Gastrocnemius medialis (tissue), 4 donors: ENCODE measurements at regions of chr22 and their contacts with region 1.

Region 1: DNA sequence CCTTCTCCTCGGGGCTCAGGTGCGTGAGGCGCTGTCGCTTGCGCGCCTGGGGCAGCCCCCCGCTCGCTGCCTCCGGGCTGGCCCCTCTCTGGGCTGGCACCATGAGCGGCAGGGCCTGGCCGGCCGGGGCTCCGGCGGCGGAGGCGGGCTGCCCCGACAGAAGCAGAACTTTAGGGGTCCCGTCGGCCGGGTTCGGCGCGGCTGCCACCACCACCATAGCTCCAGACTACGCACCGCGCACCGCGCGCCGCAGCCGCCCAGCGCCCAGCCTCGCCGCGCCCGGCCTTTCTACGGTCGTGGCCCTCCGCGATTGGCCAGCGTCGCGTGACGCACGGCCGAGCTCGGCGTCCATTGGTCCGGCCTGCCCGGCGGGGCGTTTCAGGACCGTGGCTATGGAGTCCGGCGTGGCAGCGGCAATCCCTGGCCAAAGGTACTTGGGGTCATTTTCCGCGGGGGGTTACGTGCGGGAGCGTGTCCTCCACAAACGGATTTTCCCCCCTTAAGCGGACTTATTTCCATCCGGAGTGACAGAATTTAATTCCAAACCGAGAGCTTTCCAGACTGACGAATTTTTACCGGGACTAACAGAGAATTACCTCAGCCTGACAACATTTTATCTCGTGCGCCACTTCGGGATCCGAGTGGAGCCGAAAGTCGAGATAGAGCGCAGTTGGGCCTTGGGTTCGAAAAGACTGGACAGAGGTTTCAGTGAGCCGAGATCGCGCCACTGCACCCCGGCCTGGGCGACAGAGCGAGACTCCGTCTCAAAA is at the start of gene XBP1:
- DNase-seq: peak; percentile 92 to 94
- ATAC-seq: peak; percentile 82 to 85
- H3K4me3 ChIP-seq: peak within 1 kb of the TSS; percentile 84 to 90 (median 86)
- H3K27ac ChIP-seq: peak within 1 kb of the TSS; percentile 97 to 99 (median 98)
- H3K4me1 ChIP-seq: peaks cover 36 to 41% of the 10 kb centered on the region in 2 donors
- H3K27me3 ChIP-seq: no peaks in the 10 kb centered on the region
- CTCF ChIP-seq: no peak
- POLR2A ChIP-seq: peak; percentile 100
- total RNA-seq, gene XBP1: 66.0 to 403 (median 115) TPM

Region 2: DNA sequence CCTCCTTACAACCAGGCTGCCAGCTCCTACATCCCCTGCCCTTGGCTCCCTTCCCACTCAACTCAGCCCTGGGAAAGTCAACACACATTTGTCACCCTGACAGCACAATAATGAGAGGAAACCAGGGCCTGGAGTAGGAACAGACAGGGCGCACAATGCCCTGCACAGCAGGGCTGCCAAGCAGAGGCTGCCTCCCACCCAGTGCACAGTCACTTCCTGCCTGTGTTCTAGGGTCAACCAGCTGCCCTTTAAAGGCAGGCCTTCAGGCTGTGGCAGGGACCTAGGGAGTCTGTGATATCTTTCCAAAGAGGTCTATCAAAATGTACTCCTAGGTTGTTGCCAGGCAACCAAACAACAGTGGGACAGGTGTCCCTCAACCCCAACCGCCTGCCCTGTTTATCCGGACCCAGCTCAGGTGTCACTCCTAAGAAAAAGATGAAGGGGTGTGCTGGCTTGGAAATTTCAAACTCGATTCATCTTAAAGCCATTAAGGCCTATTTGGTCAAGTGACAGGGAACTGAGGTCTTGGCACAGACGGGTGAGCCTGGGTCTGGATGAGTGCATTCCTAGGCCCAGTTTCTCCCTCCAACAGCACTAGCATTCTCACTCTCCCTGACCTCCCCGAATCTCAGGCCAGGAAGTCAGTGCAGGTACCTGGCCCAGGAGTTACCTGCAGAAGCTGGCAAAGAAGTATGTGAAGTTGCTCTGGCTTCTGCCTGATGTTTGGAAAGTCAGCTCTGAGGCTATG is 771.1 kb before region 1 on chr22:
- in situ Hi-C with region 1: no loop called
- intact Hi-C with region 1: loop called (anchors 5 kb)
- DNase-seq: peak; percentile 45 to 75
- ATAC-seq: peak; percentile 40 to 49
- H3K4me3 ChIP-seq: no peak overlapping the region
- H3K27ac ChIP-seq: peak overlapping the region; percentile 76 to 82 (median 80)
- H3K4me1 ChIP-seq: peaks cover 78 to 79% of the 10 kb centered on the region in 2 donors
- H3K27me3 ChIP-seq: no peaks in the 10 kb centered on the region
- CTCF ChIP-seq: no peak
- POLR2A ChIP-seq: no peak

Region 3: DNA sequence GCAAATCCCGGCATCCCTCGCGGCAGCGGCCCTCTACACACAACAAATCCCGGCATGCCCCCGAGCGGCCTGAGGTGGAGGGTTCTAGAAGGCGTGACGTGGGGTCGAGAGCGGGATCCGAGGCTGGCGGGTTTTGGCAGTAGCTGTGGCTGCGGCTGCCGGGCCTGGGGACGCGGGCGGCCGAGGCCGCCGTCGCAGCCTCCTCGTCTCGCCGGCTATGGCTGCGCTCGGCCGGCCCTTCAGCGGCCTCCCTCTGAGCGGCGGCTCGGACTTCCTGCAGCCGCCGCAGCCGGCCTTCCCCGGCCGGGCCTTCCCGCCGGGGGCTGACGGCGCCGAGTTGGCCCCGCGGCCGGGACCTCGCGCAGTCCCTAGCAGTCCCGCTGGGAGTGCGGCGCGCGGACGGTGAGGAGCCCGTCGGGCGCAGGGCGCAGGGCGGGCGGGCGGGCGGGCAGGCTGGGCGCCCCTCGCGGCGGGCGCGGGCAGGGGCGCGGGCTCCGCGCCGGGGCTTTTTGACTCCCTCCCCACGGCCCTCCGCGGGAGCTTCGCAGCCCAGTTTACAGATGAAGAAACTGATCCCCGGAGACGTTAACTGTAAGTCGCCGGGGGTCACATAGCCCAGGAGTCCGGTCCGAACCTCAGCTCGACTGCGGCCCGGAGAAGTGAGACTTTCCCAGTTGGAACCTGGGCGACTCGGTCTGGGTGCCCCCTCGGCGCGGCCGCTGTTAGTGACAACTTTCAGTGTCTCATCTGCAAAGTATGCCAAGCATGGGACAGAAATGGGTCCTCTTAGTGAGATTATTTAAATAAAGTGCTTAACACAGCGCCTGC is 27.6 kb before region 1 on chr22 and contains the start of gene CCDC117:
- in situ Hi-C with region 1: no loop called
- intact Hi-C with region 1: loop called (anchors 1 kb)
- DNase-seq: peak; percentile 92 to 94
- ATAC-seq: peak; percentile 97 to 98
- H3K4me3 ChIP-seq: peak within 1 kb of the TSS; percentile 71 to 92 (median 78)
- H3K27ac ChIP-seq: peak within 1 kb of the TSS; percentile 89 to 99 (median 94)
- H3K4me1 ChIP-seq: peaks cover 16% of the 10 kb centered on the region in 2 donors
- H3K27me3 ChIP-seq: no peaks in the 10 kb centered on the region
- CTCF ChIP-seq: peak in 4 of 5 experiments; percentile 29 to 70 (median 60)
- POLR2A ChIP-seq: peak; percentile 88 to 93
- total RNA-seq, gene CCDC117: 23.2 to 40.1 (median 30.5) TPM

Region 4: GRCh38 chr22:28817919-28818909 is 17.7 kb after region 1 on chr22:
- in situ Hi-C with region 1: no loop called
- intact Hi-C with region 1: no loop called
- DNase-seq: no peak
- ATAC-seq: peak in 1 of 2 donors; percentile 46
- H3K4me3 ChIP-seq: no peak overlapping the region
- H3K27ac ChIP-seq: peak overlapping the region; percentile 6 to 65 (median 53)
- H3K4me1 ChIP-seq: peaks cover 14 to 18% of the 10 kb centered on the region in 2 donors
- H3K27me3 ChIP-seq: no peaks in the 10 kb centered on the region
- CTCF ChIP-seq: no peak
- POLR2A ChIP-seq: no peak

Region 5: GRCh38 chr22:29031227-29032011 is 230.9 kb after region 1 on chr22:
- in situ Hi-C with region 1: no loop called
- intact Hi-C with region 1: loop called (anchors 5 kb)
- DNase-seq: peak; percentile 34 to 67
- ATAC-seq: peak; percentile 90 to 93
- H3K4me3 ChIP-seq: peak overlapping the region; percentile 51 to 70 (median 58)
- H3K27ac ChIP-seq: peak overlapping the region; percentile 69 to 83 (median 80)
- H3K4me1 ChIP-seq: peaks cover 19 to 23% of the 10 kb centered on the region in 2 donors
- H3K27me3 ChIP-seq: no peaks in the 10 kb centered on the region
- CTCF ChIP-seq: peak in 1 of 5 experiments; percentile 19
- POLR2A ChIP-seq: no peak

Region 6: DNA sequence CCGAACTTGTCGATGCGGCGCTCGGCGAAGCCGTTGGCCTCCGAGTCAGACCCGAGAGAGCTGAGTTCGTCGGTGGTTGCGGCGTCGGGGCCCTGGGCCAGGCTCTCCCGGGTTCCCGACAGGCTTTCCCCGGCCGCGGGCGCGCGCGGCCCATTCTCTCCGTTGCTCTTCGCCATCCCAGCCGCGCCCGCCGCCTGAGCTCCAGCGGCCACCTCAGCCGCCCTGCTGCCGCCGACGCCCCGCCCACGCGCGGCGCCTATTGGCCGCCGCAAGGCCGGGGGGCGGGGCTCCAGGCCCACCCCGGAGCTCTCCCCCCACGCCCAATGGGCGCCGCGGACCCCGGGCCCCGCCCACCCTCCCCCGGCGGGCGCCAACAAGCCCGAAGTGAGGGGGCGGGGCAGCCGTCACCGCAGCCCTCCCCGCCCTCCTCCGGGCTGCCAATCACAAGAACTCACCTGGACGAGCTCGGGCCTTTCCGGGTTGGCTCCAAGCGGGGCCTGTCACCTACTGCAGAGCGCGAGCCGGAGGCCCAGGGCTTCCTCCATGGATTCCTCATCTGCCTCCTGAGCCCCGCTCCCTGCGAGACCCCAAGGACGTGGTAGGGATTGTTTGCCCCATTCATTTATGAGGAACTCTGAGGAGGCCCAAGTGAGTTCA is 1526.3 kb after region 1 on chr22 and contains the start of gene TBC1D10A:
- in situ Hi-C with region 1: no loop called
- intact Hi-C with region 1: loop called (anchors 5 kb)
- DNase-seq: peak; percentile 73 to 88
- ATAC-seq: peak; percentile 84 to 92
- H3K4me3 ChIP-seq: peak within 1 kb of the TSS; percentile 83 to 99 (median 87)
- H3K27ac ChIP-seq: peak within 1 kb of the TSS; percentile 81 to 84 (median 82)
- H3K4me1 ChIP-seq: peaks cover 21 to 30% of the 10 kb centered on the region in 2 donors
- H3K27me3 ChIP-seq: no peaks in the 10 kb centered on the region
- CTCF ChIP-seq: no peak
- POLR2A ChIP-seq: peak; percentile 75 to 84
- total RNA-seq, gene TBC1D10A: 4.1 to 9.6 (median 6.2) TPM